Aorta (tissue), 5 donors: ENCODE measurements at regions of chr6 and their contacts with region 1.

Region 1: DNA sequence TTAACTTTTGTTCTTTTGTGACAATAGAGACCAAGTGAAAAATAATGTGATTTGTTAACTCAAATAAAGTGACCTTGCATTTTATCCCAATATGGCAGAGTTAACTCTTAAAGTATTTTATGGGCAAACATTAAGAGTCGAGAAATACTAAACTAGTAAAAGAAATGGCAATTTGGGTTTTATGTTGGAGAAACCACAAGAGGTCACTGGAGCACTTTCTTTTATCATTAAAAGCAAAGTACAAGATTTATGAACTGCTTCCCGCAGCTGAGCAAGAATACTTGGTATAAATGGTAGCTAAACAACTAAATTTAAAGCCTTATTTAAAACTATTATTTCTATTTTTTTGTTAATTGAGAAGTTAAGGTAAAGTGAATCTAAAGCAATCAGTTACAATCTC is 33.5 kb upstream of the MCM9 start:
- DNase-seq: no peak
- ATAC-seq: no peak
- H3K4me3 ChIP-seq: no peak overlapping the region
- H3K27ac ChIP-seq: no peak overlapping the region
- H3K4me1 ChIP-seq: no peaks in the 10 kb centered on the region
- H3K27me3 ChIP-seq: no peaks in the 10 kb centered on the region

Region 2: GRCh38 chr6:118864341-118865099 is 103.9 kb before region 1 on chr6:
- intact Hi-C with region 1: no loop called
- DNase-seq: no peak
- ATAC-seq: no peak
- H3K4me3 ChIP-seq: no peak overlapping the region
- H3K27ac ChIP-seq: no peak overlapping the region
- H3K4me1 ChIP-seq: peaks cover 5 to 8% of the 10 kb centered on the region in 2 donors
- H3K27me3 ChIP-seq: no peaks in the 10 kb centered on the region

Region 3: GRCh38 chr6:119110601-119111548 is 142.5 kb after region 1 on chr6:
- intact Hi-C with region 1: loop called (anchors 2 kb)
- DNase-seq: no peak
- ATAC-seq: peak; percentile 72
- H3K4me3 ChIP-seq: no peak overlapping the region
- H3K27ac ChIP-seq: no peak overlapping the region
- H3K4me1 ChIP-seq: no peaks in the 10 kb centered on the region
- H3K27me3 ChIP-seq: no peaks in the 10 kb centered on the region